ENCODE measurements at regions of chr3 and their contacts with region 1.

Region 1: DNA sequence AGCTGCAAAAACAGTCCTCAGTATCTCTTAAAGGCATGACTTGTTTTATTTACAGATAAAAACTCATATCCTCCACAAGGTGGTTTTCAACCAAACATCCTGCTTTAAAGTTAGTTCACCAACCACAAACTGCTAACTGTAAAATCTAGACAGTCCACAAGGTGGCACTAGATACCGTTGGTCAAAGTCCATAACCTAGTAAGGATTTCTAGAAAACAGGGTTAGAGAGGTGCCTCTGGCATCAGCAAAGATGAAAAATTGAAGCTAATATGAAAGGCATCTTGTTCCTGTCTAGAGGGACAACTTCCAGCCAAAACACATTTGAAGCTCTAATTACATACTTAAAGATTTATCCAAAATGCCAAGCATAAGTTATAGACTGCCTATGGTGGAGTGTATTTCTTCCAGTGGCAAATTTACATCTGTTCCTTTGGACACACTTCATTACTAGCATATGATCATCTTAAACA is 56.0 kb downstream of the ZMAT3 start:
- DNase-seq: peak in 25 of 42 donors; percentile 11 to 87 (median 65)

Region 2: GRCh38 chr3:179071550-179072397 is 56.2 kb after region 1 on chr3 and contains the start of gene ZMAT3:
- intact Hi-C with region 1: loop called (anchors 5 kb)
- DNase-seq: peak; percentile 79 to 96 (median 92)

Measured in head of caudate nucleus (tissue), 42 donors.